Activated T-helper 1 cell treated with anti-CD3 and anti-CD28 coated beads, Interleukin-12 subunit alpha, Interleukin-12 subunit beta, Interleukin-2, Interleukin-4 antibody, amounts not matched to agents 30 ng/mL and 10 ng/mL and 1 ng/mL, durations not matched to agents 14 hours and 24 hours and 36 hours (primary cell): ENCODE measurements at regions of chr16 and their contacts with region 1.

Region 1: GRCh38 chr16:57167953-57168352 is 17.9 kb downstream of the PSME3IP1 start:
- DNase-seq: peak; percentile 28
- H3K4me3 Mint-ChIP-seq: no peak overlapping the region
- H3K27ac Mint-ChIP-seq: no peak overlapping the region
- H3K4me1 Mint-ChIP-seq: no peaks in the 10 kb centered on the region
- H3K27me3 Mint-ChIP-seq: no peaks in the 10 kb centered on the region

Region 2: GRCh38 chr16:56964243-56965148 is 203.5 kb before region 1 on chr16:
- intact Hi-C with region 1: loop called (anchors 1 kb)
- DNase-seq: peak; percentile 89
- H3K4me3 Mint-ChIP-seq: no peak overlapping the region
- H3K27ac Mint-ChIP-seq: peak overlapping the region; percentile 59
- H3K4me1 Mint-ChIP-seq: peaks cover 23% of the 10 kb centered on the region
- H3K27me3 Mint-ChIP-seq: peaks cover 1% of the 10 kb centered on the region

Region 3: GRCh38 chr16:57000271-57001025 is 167.5 kb before region 1 on chr16:
- intact Hi-C with region 1: no loop called
- DNase-seq: no peak
- H3K4me3 Mint-ChIP-seq: peak overlapping the region; percentile 54
- H3K27ac Mint-ChIP-seq: peak overlapping the region; percentile 91
- H3K4me1 Mint-ChIP-seq: peaks cover 90% of the 10 kb centered on the region
- H3K27me3 Mint-ChIP-seq: no peaks in the 10 kb centered on the region

Region 4: DNA sequence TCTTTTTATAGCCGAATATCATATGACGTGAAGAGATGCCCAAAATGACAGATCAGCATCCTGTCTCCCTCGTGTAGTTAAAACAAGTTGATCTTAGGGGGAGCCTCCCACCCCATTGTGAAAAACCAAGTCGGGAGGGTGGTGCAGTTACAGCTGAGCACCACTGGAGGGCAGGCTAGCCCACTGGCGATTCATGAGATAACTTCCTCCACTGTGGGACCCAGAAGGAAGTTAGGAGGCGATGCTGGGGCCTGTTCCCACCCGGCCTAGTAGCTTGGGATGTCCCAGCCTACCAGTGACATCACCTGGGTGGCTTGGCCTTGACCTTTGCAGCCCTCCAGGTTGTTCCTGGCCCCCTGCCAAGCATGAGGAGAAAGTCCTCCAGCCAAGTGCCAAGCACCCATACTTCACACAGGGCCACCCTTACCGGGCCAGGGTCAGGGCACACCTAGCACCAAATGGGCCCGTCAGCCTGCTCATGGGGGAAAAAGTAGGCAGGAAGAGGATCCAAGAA is 83.6 kb before region 1 on chr16:
- intact Hi-C with region 1: loop called (anchors 1 kb)
- DNase-seq: peak; percentile 64
- H3K4me3 Mint-ChIP-seq: no peak overlapping the region
- H3K27ac Mint-ChIP-seq: peak overlapping the region; percentile 71
- H3K4me1 Mint-ChIP-seq: peaks cover 8% of the 10 kb centered on the region
- H3K27me3 Mint-ChIP-seq: no peaks in the 10 kb centered on the region

Region 5: DNA sequence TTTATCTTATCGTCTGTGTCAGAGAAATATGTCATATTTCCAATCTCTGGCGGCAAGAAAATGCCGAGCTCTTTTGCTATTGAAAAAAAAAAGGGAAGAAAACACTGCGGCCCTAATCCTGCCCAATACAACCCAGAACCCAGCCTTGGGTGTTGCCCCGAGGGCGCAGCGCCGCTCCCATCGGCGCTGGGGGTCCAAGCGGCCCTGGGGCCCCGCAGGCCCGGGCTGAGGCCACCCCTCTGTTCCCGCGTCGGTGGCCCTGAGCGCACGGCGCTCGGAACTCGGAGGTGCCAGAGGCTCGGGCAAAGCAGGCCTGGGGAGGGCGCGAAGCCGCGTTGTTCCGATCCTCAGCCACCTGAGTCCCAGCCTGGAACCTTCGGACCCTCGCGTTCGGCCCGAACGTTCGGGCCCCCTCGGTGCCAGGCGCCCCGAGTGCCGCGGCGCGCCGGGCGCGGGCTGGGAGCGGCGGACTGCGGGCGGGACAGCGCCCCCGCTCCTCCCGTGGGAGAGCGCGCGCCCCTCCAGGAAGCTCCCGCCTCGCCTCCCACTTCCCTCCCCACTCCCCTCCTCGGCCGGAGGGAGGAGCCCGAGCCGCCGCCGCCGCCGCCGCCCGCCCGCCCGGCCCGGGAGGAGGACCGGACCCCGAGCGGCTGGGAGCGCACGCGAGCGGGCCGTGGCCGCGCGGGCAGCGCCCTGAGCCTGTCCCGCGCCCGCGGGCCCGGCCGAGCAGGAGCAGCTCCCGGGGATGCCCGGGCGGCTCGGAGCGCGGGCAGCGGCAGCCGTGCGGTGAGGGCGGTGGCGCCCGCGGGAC is 75.8 kb before region 1 on chr16 and contains the start of gene CPNE2:
- intact Hi-C with region 1: loop called (anchors 1 kb)
- DNase-seq: peak; percentile 34
- H3K4me3 Mint-ChIP-seq: peak within 1 kb of the TSS; percentile 84
- H3K27ac Mint-ChIP-seq: peak within 1 kb of the TSS; percentile 75
- H3K4me1 Mint-ChIP-seq: peaks cover 7% of the 10 kb centered on the region
- H3K27me3 Mint-ChIP-seq: peaks cover 22% of the 10 kb centered on the region
- total RNA-seq, gene CPNE2: 3.7 and 4.6 TPM in 2 replicates

Region 6: GRCh38 chr16:57194512-57194911 is 26.6 kb after region 1 on chr16:
- intact Hi-C with region 1: no loop called
- DNase-seq: no peak
- H3K4me3 Mint-ChIP-seq: no peak overlapping the region
- H3K27ac Mint-ChIP-seq: no peak overlapping the region
- H3K4me1 Mint-ChIP-seq: peaks cover 24% of the 10 kb centered on the region
- H3K27me3 Mint-ChIP-seq: no peaks in the 10 kb centered on the region